ENCODE measurements at regions of chr12 and their contacts with region 1.

Region 1: DNA sequence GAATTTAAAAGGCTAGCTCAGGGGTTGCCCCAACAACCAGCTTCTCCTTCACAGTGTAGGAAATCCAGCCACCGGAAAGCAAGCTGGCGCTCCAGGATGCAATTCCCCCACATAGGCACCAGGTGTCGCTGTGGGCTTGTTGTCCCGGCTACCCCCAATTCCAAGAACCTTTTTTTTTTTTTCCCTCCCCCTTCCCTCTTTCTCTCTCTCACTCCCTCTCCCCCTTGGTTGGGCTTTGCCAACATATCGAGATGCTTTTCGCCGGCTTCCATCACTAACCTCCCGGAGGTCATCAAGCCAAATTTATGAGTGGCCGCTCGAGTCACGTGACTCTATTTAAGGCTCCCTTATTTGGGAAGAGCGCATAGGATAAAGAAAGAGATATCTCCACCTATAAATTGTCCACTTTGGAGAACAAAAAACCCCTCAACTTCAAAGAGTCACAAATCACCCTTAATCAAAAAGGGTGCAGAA is at the start of gene HOXC5:
- DNase-seq: peak in 4 of 5 donors; percentile 54 to 60 (median 55)
- H3K4me3 ChIP-seq: no peak within 1 kb of the TSS
- H3K4me3 Mint-ChIP-seq: peak within 1 kb of the TSS; percentile 41 to 82 (median 64)
- H3K27ac ChIP-seq: no peak within 1 kb of the TSS
- H3K27ac Mint-ChIP-seq: peak within 1 kb of the TSS in 4 of 7 donors; percentile 15 to 89 (median 83)
- H3K4me1 ChIP-seq: peaks cover 13% of the 10 kb centered on the region
- H3K4me1 Mint-ChIP-seq: peaks cover 11 to 29% (median 21%) of the 10 kb centered on the region in 4 donors
- H3K27me3 ChIP-seq: peaks cover 71% of the 10 kb centered on the region
- H3K27me3 Mint-ChIP-seq: peaks cover 57 to 63% of the 10 kb centered on the region in 2 donors
- total RNA-seq, gene HOXC5: not detected

Region 2: DNA sequence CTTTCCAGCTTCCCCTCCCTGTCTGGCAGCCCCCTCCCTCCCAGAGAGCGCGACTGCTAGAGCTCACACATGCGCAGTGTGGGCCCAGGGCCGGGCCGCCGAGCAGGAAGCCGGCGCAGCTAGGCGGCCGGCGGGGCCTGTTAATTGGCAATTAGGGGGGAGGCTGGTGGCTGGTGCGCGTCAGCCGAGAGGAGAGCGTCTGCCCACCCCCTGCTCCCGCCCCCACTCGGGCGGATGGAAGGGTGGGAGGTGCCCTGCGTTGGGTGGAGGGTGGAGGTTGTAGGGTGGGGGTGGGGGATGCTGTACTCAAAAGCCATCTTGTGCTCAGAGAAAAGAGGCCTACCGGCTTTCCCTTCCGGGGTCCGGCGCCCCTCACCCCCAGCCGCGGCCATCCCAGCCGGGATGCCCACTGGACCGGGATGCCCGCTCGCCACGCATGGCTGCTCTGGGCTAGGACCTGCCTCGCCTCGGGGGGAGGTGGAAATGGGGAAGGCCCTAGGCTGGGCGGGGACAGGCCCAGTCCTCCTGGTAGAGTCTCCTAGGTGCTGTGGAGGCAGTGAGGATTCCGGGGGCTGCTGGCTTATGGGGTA is 14.7 kb before region 1 on chr12:
- CTCF ChIA-PET with region 1: interaction called, 12 read pairs
- POLR2A ChIA-PET with region 1: no interaction called
- intact Hi-C with region 1: no loop called
- DNase-seq: peak; percentile 66 to 74 (median 68)
- H3K4me3 ChIP-seq: peak overlapping the region; percentile 29 to 68
- H3K4me3 Mint-ChIP-seq: peak overlapping the region; percentile 74 to 93 (median 86)
- H3K27ac ChIP-seq: no peak overlapping the region
- H3K27ac Mint-ChIP-seq: peak overlapping the region in 3 of 7 donors; percentile 37 to 57 (median 49)
- H3K4me1 ChIP-seq: peaks cover 21% of the 10 kb centered on the region
- H3K4me1 Mint-ChIP-seq: peaks cover 6 to 31% (median 17%) of the 10 kb centered on the region in 4 donors
- H3K27me3 ChIP-seq: peaks cover 59% of the 10 kb centered on the region
- H3K27me3 Mint-ChIP-seq: peaks cover 49 to 66% of the 10 kb centered on the region in 2 donors

Region 3: DNA sequence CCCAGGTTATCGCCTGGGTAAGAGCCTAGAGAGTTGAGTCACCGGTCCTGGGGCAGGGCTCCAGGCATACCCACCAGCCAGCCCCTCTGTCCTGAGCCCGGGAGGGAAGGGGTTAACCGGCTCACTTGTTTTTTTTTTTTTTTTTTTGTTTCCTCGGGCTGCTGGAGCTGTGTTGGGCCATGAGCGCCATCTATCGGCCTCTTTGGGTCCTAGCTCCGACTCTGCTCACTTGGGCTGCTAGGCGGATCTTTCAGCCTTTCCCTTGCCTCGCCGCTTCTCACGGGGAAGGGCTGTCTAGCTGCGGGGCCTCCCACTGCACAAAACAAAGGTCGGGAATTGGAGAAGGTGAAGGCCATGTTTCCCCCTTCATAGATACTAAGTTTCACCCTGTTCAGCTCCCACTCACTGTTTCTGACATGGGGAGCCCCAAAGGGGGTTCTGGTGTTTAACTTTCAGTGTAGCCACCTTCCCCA is 158.9 kb after region 1 on chr12:
- CTCF ChIA-PET with region 1: interaction called, 49 read pairs
- POLR2A ChIA-PET with region 1: no interaction called
- intact Hi-C with region 1: loop called (anchors 1 kb)
- DNase-seq: peak; percentile 79 to 81 (median 79)
- H3K4me3 ChIP-seq: no peak overlapping the region
- H3K4me3 Mint-ChIP-seq: peak overlapping the region in 4 of 8 donors; percentile 11 to 66 (median 32)
- H3K27ac ChIP-seq: no peak overlapping the region
- H3K27ac Mint-ChIP-seq: peak overlapping the region in 2 of 7 donors; percentile 67 to 68
- H3K4me1 ChIP-seq: peaks cover 22% of the 10 kb centered on the region
- H3K4me1 Mint-ChIP-seq: peaks cover 17 to 60% (median 25%) of the 10 kb centered on the region in 4 donors
- H3K27me3 ChIP-seq: peaks cover 23% of the 10 kb centered on the region
- H3K27me3 Mint-ChIP-seq: peaks cover 20 to 32% of the 10 kb centered on the region in 2 donors

Region 4: DNA sequence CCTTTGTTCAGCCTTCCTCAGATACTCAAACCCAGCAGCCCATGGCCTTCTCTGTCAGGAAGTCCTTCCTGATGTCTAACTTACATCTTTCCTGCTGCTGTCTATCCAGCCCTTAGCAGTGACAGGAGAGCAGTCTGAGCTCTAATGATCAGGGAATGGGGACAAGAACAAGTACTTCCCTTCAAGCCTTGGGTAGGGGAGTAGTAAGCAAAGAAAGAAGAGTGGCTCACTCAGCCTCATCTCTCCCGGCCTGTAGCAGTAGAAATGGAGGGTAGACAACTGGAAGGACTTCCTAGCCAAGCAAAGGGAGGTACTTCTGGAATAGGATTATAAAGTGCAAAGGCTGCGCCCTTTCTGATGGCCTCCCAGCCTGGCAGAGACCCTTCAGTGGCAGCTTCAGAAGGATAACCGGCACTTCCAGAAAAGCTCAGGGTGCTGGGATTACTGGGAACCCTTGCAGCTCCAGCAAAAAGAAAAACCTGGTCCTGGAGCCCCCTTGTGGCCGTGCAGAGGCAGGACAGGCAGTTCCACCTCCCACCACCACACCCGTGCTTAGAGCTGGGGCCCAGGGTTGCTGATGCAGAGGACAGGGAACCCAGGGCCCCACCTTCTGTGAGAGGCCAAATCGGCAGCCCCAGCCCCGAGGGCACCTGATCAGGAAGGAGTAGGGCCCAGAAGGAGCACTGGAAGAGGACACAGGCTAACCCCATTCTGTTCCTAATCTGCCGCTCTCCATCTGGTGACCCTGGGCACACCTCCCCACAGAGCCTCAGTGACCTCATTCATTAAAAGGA is 168.5 kb after region 1 on chr12:
- CTCF ChIA-PET with region 1: interaction called, 24 read pairs
- POLR2A ChIA-PET with region 1: no interaction called
- intact Hi-C with region 1: loop called (anchors 1 kb)
- DNase-seq: peak; percentile 60 to 71 (median 64)
- H3K4me3 ChIP-seq: no peak overlapping the region
- H3K4me3 Mint-ChIP-seq: no peak overlapping the region
- H3K27ac ChIP-seq: no peak overlapping the region
- H3K27ac Mint-ChIP-seq: peak overlapping the region in 1 of 7 donors; percentile 42
- H3K4me1 ChIP-seq: no peaks in the 10 kb centered on the region
- H3K4me1 Mint-ChIP-seq: peaks cover 0 to 5% (median 2%) of the 10 kb centered on the region in 4 donors
- H3K27me3 ChIP-seq: peaks cover 19% of the 10 kb centered on the region
- H3K27me3 Mint-ChIP-seq: peaks cover 37 to 51% of the 10 kb centered on the region in 2 donors

Region 5: GRCh38 chr12:54786081-54786480 is 753.4 kb after region 1 on chr12:
- CTCF ChIA-PET with region 1: no interaction called
- POLR2A ChIA-PET with region 1: no interaction called
- intact Hi-C with region 1: no loop called
- DNase-seq: no peak
- H3K4me3 ChIP-seq: no peak overlapping the region
- H3K4me3 Mint-ChIP-seq: no peak overlapping the region
- H3K27ac ChIP-seq: no peak overlapping the region
- H3K27ac Mint-ChIP-seq: no peak overlapping the region
- H3K4me1 ChIP-seq: no peaks in the 10 kb centered on the region
- H3K4me1 Mint-ChIP-seq: no peaks in the 10 kb centered on the region
- H3K27me3 ChIP-seq: no peaks in the 10 kb centered on the region
- H3K27me3 Mint-ChIP-seq: peaks cover 10 to 15% of the 10 kb centered on the region in 2 donors